Activated CD4-positive, alpha-beta T cell treated with anti-CD3 and anti-CD28 coated beads for 36 hours (primary cell): ENCODE measurements at regions of chr5 and their contacts with region 1.

Region 1: GRCh38 chr5:119397518-119398380 is 41.9 kb downstream of the TNFAIP8 start:
- DNase-seq: peak; percentile 43
- ATAC-seq: peak; percentile 70
- H3K4me3 Mint-ChIP-seq: peak overlapping the region; percentile 56
- H3K27ac Mint-ChIP-seq: peak overlapping the region; percentile 88
- H3K4me1 Mint-ChIP-seq: peaks cover 88% of the 10 kb centered on the region
- H3K27me3 Mint-ChIP-seq: no peaks in the 10 kb centered on the region

Region 2: DNA sequence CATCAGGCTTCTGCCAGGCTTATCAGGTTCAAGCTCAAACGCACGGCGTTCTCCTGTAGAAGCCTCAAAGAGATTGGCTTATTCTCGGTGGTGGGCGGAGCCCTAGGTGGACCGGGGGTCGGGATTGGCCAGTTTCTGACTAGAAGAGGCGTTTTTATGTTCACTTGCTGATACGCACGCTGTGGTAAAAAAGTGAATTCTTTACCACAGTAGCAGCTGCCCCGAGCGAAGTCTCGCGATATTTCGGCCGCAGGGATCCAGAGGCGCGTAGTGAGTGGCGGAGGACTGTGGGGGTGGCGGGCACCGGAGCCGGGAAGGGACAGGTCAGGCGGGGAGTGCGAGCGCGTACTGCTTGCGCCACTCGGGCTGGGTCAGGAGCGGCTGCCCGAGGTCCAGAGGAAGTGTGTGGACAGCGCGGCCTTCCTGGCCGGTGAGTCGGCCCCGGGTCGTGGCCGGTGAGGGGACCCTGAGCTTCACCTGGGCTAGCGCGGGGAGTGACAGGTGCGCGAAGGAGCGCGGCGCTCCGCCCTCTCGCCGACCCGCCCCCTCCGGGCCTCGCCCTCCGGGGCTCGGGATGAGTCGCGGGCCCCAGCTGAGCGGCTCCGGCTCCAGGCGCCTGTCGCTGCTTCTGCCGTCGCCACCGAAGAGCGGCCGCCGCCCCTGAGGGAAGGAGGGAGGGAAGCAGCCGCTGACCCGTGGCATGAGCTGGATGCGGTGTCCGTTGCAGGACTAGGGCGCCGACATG is 326.7 kb before region 1 on chr5 and contains the start of gene DMXL1:
- CTCF ChIA-PET with region 1: no interaction called
- POLR2A ChIA-PET with region 1: interaction called, 3 read pairs
- intact Hi-C with region 1: loop called in 1 of 2 experiments (anchors 2 kb)
- DNase-seq: peak; percentile 99
- ATAC-seq: peak; percentile 87
- H3K4me3 Mint-ChIP-seq: peak within 1 kb of the TSS; percentile 92
- H3K27ac Mint-ChIP-seq: peak within 1 kb of the TSS; percentile 96
- H3K4me1 Mint-ChIP-seq: peaks cover 35% of the 10 kb centered on the region
- H3K27me3 Mint-ChIP-seq: no peaks in the 10 kb centered on the region
- total RNA-seq, gene DMXL1: 23.5 to 31.1 TPM

Region 3: DNA sequence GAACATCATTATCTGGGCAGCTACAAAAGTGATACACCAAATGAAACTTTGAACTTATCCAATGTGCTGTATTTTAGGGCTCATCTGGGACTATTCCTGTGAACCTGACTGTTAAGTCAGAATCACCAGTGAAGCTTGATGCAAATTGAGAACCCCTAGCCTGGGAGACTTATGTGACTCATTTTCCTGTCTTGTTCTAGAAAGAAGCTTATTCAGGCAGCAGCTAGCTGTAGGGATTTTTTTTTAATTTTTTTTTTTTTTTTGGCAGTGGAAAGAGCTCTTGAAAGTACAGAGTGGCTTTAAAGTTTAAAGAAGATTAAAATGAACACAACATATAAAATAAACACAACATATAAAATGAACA is 123.0 kb before region 1 on chr5:
- CTCF ChIA-PET with region 1: no interaction called
- POLR2A ChIA-PET with region 1: interaction called, 7 read pairs
- intact Hi-C with region 1: loop called in 1 of 2 experiments (anchors 2 kb)
- DNase-seq: no peak
- ATAC-seq: peak; percentile 65
- H3K4me3 Mint-ChIP-seq: peak overlapping the region; percentile 96
- H3K27ac Mint-ChIP-seq: peak overlapping the region; percentile 96
- H3K4me1 Mint-ChIP-seq: peaks cover 87% of the 10 kb centered on the region
- H3K27me3 Mint-ChIP-seq: no peaks in the 10 kb centered on the region

Region 4: DNA sequence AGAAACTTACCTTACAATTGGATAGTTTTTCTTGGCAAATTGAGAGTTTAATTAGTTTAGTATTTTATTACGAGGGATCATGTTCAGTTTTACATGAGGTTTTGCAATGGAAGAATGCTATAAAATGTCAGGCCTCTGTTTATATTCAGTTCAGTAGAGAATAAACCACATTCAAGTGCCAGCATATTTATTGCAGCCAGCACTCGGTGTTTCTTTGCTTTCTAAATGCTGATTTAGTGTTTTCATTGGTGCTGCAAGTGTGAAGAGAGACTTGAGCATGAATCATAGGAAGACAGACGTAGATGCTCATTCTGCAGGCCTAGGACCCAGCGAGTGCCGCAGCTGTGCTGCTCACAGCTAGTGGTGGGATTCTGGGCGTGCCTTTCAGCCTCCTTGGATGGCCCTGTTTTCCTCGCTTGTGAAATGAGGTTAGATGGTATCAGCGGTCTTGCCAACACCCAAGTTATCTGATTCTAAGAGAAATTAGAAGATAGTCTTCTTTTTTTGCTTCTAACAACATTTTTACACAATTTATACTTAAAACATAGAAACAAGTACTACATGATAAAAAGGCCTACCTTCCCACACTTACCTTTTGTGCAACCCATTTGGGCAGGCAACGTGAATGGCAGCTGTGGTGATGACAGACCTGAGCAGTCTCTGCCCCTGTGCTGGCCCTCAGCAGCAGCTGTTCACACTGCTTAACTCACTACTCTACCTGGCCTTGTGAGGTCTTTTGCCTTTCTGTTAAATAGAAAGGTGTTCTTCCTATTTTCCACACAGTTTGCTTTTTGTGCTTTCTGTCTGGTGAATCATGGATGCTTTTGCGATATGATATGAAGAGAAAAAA is 68.8 kb before region 1 on chr5:
- CTCF ChIA-PET with region 1: interaction called, 7 read pairs
- POLR2A ChIA-PET with region 1: no interaction called
- intact Hi-C with region 1: loop called (anchors 1 kb)
- DNase-seq: peak; percentile 80
- ATAC-seq: peak; percentile 58
- H3K4me3 Mint-ChIP-seq: peak overlapping the region; percentile 45
- H3K27ac Mint-ChIP-seq: peak overlapping the region; percentile 98
- H3K4me1 Mint-ChIP-seq: peaks cover 96% of the 10 kb centered on the region
- H3K27me3 Mint-ChIP-seq: no peaks in the 10 kb centered on the region

Region 5: GRCh38 chr5:119355685-119356611 is 41.8 kb before region 1 on chr5 and contains the start of gene TNFAIP8:
- CTCF ChIA-PET with region 1: interaction called, 3 read pairs
- POLR2A ChIA-PET with region 1: interaction called, 3 read pairs
- intact Hi-C with region 1: loop called (anchors 1 to 5 kb)
- DNase-seq: peak; percentile 91
- ATAC-seq: peak; percentile 65
- H3K4me3 Mint-ChIP-seq: peak within 1 kb of the TSS; percentile 98
- H3K27ac Mint-ChIP-seq: peak within 1 kb of the TSS; percentile 99
- H3K4me1 Mint-ChIP-seq: peaks cover 62% of the 10 kb centered on the region
- H3K27me3 Mint-ChIP-seq: no peaks in the 10 kb centered on the region
- total RNA-seq, gene TNFAIP8: 166 to 171 TPM